ENCODE measurements at regions of chr22 and their contacts with region 1.

Region 1: GRCh38 chr22:22959147-22959827 is 71.7 kb downstream of the IGLL5 start:
- DNase-seq: peak; percentile 80
- ATAC-seq: peak; percentile 61
- H3K4me3 ChIP-seq: no peak overlapping the region
- H3K27ac ChIP-seq: no peak overlapping the region
- H3K4me1 ChIP-seq: no peaks in the 10 kb centered on the region
- H3K27me3 ChIP-seq: peaks cover 10% of the 10 kb centered on the region
- CTCF ChIP-seq: peak; percentile 98

Region 2: GRCh38 chr22:22753526-22754267 is 205.6 kb before region 1 on chr22:
- CTCF ChIA-PET with region 1: no interaction called
- POLR2A ChIA-PET with region 1: no interaction called
- intact Hi-C with region 1: loop called (anchors 1 kb)
- DNase-seq: peak; percentile 62
- ATAC-seq: peak; percentile 67
- H3K4me3 ChIP-seq: no peak overlapping the region
- H3K27ac ChIP-seq: no peak overlapping the region
- H3K4me1 ChIP-seq: no peaks in the 10 kb centered on the region
- H3K27me3 ChIP-seq: no peaks in the 10 kb centered on the region
- CTCF ChIP-seq: peak; percentile 71

Region 3: GRCh38 chr22:22848364-22848866 is 110.9 kb before region 1 on chr22:
- CTCF ChIA-PET with region 1: no interaction called
- POLR2A ChIA-PET with region 1: no interaction called
- intact Hi-C with region 1: loop called (anchors 2 kb)
- DNase-seq: peak; percentile 77
- ATAC-seq: peak; percentile 95
- H3K4me3 ChIP-seq: no peak overlapping the region
- H3K27ac ChIP-seq: no peak overlapping the region
- H3K4me1 ChIP-seq: no peaks in the 10 kb centered on the region
- H3K27me3 ChIP-seq: peaks cover 19% of the 10 kb centered on the region; the same call in 1 of the 2 replicates
- CTCF ChIP-seq: peak; percentile 85

Region 4: GRCh38 chr22:23128269-23129108 is 169.2 kb after region 1 on chr22:
- CTCF ChIA-PET with region 1: interaction called, 19 read pairs
- POLR2A ChIA-PET with region 1: interaction called, 3 read pairs
- intact Hi-C with region 1: no loop called
- DNase-seq: peak; percentile 73
- ATAC-seq: peak; percentile 78
- H3K4me3 ChIP-seq: no peak overlapping the region
- H3K27ac ChIP-seq: no peak overlapping the region
- H3K4me1 ChIP-seq: no peaks in the 10 kb centered on the region
- H3K27me3 ChIP-seq: no peaks in the 10 kb centered on the region
- CTCF ChIP-seq: peak; percentile 82